Mammary epithelial cell (primary cell): ENCODE measurements at regions of chr2 and their contacts with region 1.

Region 1: DNA sequence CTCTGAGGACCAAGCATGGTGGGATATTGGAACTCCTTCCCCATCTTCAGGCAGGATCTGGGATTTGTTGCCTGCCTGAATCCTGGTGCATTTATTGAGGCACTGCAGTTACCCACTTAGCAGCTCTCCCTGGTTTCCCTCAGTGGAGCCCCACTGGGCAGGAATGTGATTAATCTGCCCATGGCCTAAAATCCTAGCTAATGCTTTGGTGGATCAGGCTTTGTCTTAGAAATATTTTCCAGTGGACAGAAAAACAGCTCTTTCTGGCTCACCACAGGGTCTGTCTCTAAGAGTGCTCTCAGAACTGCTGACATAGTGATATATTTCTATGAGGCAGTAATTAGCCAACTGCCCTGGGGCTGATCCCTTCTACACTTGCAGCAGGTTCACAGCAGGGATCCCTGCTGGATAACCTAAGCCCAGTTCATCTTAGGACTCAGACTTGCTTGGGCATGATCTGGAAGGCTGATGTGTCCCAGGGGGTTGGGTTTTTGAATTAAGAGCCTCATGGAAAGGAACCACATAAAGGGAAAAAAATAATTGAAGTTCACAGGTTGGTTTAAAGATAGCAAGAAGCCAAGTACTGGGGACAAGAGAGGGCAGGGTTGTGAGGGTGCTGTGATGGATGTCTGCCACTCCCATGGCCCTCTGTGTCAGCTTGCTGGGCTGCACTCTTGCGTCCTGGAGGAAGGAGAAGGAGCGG is 44.3 kb upstream of the ZDBF2 start:
- DNase-seq: peak; percentile 82
- H3K4me3 ChIP-seq: no peak overlapping the region
- H3K27ac ChIP-seq: no peak overlapping the region
- H3K4me1 ChIP-seq: peaks cover 10% of the 10 kb centered on the region
- H3K27me3 ChIP-seq: no peaks in the 10 kb centered on the region
- CTCF ChIP-seq: peak; percentile 26 to 38

Region 2: DNA sequence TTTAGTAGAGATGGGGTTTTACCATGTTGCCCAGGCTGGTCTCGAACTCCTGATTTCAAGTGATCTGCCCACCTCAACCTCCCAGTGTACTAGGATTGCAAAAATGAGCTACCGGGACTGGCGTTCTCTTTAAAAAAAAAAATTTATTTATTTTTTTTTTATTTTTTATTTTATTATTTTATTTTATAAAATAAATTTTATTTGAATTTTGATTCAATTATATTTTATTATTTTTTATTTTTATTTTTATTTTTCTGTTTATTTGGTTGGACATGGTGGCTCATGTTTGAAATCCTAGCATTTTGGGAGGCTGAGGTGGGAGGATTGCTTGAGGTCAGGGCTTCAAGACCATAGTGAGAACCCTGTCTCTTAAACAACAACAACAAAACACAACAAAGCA is 38.1 kb before region 1 on chr2:
- CTCF ChIA-PET with region 1: interaction called, 29 read pairs
- dilution Hi-C with region 1: no loop called
- in situ Hi-C with region 1: no loop called
- intact Hi-C with region 1: no loop called
- DNase-seq: no peak
- H3K4me3 ChIP-seq: no peak overlapping the region
- H3K27ac ChIP-seq: no peak overlapping the region
- H3K4me1 ChIP-seq: no peaks in the 10 kb centered on the region
- H3K27me3 ChIP-seq: no peaks in the 10 kb centered on the region
- CTCF ChIP-seq: no peak

Region 3: DNA sequence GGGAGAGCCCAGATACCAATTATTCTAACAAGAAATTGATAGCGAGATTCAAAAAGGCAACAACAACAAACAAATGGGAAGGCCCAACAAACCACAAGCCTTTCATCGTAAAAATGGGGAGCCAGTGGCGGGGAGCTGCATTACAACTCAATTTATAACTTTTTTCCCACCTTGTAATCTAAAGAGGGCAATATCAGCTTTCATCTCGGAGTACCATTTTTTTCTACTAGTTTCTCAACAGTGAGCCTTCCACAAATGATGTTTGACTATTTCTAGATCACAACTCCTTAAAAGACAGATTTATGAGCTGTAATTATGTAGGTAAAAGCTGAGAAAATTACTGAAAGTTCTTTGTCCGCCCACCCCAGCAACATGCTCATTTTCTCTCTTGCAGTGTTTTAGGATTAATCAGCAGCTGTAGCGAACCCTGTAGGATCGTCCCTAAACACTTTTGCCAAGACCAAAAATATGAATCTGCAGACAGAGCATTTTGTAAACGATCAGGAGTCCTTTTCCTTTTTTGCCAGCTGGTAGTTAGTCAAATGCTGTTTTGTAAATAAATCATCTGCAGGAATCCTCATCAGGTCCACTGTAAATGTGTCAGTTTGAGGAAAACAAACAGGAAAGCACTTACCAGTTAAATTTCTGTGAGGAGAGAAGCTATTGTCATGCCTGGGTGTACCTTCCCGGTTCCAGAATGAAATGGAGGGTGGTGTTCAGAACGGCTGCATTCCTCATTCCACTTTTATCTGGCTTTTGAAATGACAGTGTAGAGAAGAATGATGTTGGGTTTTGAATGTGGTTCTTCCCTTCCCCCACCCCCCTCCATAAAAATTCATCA is 17.3 kb before region 1 on chr2:
- CTCF ChIA-PET with region 1: no interaction called
- dilution Hi-C with region 1: no loop called
- in situ Hi-C with region 1: no loop called
- intact Hi-C with region 1: loop called (anchors 2 kb)
- DNase-seq: peak; percentile 43
- H3K4me3 ChIP-seq: peak overlapping the region; percentile 21 to 32 (median 24)
- H3K27ac ChIP-seq: peak overlapping the region; percentile 28
- H3K4me1 ChIP-seq: peaks cover 30% of the 10 kb centered on the region
- H3K27me3 ChIP-seq: no peaks in the 10 kb centered on the region
- CTCF ChIP-seq: no peak

Region 4: GRCh38 chr2:206274434-206275268 is 44.4 kb after region 1 on chr2 and contains the start of gene ZDBF2:
- CTCF ChIA-PET with region 1: no interaction called
- dilution Hi-C with region 1: loop called (anchors 5 kb)
- in situ Hi-C with region 1: no loop called
- intact Hi-C with region 1: no loop called
- DNase-seq: peak; percentile 49
- H3K4me3 ChIP-seq: peak within 1 kb of the TSS; percentile 69 to 79 (median 78)
- H3K27ac ChIP-seq: peak within 1 kb of the TSS; percentile 69
- H3K4me1 ChIP-seq: no peaks in the 10 kb centered on the region
- H3K27me3 ChIP-seq: peaks cover 4% of the 10 kb centered on the region
- CTCF ChIP-seq: no peak
- total RNA-seq, gene ZDBF2: 11.0 to 13.3 TPM

Region 5: GRCh38 chr2:206502729-206503128 is 272.5 kb after region 1 on chr2:
- CTCF ChIA-PET with region 1: no interaction called
- dilution Hi-C with region 1: no loop called
- in situ Hi-C with region 1: no loop called
- intact Hi-C with region 1: no loop called
- DNase-seq: no peak
- H3K4me3 ChIP-seq: no peak overlapping the region
- H3K27ac ChIP-seq: no peak overlapping the region
- H3K4me1 ChIP-seq: no peaks in the 10 kb centered on the region
- H3K27me3 ChIP-seq: no peaks in the 10 kb centered on the region
- CTCF ChIP-seq: no peak